Activated naive CD4-positive, alpha-beta T cell treated with anti-CD3 and anti-CD28 coated beads for 36 hours (primary cell): ENCODE measurements at regions of chr1 and their contacts with region 1.

Region 1: GRCh38 chr1:89994805-89995597 is at the start of gene ZNF326:
- DNase-seq: peak; percentile 94
- H3K4me3 Mint-ChIP-seq: peak within 1 kb of the TSS; percentile 96
- H3K27ac Mint-ChIP-seq: peak within 1 kb of the TSS; percentile 90
- H3K4me1 Mint-ChIP-seq: peaks cover 42% of the 10 kb centered on the region
- H3K27me3 Mint-ChIP-seq: no peaks in the 10 kb centered on the region
- total RNA-seq, gene ZNF326: 17.4 to 17.9 TPM

Region 2: GRCh38 chr1:89605692-89606091 is 389.3 kb before region 1 on chr1:
- CTCF ChIA-PET with region 1: no interaction called
- intact Hi-C with region 1: loop called (anchors 2 kb)
- DNase-seq: no peak
- H3K4me3 Mint-ChIP-seq: no peak overlapping the region
- H3K27ac Mint-ChIP-seq: no peak overlapping the region
- H3K4me1 Mint-ChIP-seq: peaks cover 95% of the 10 kb centered on the region
- H3K27me3 Mint-ChIP-seq: no peaks in the 10 kb centered on the region

Region 3: GRCh38 chr1:89804642-89805237 is 190.3 kb before region 1 on chr1:
- CTCF ChIA-PET with region 1: interaction called, 52 read pairs
- intact Hi-C with region 1: loop called (anchors 2 kb)
- DNase-seq: peak; percentile 96
- H3K4me3 Mint-ChIP-seq: no peak overlapping the region
- H3K27ac Mint-ChIP-seq: no peak overlapping the region
- H3K4me1 Mint-ChIP-seq: no peaks in the 10 kb centered on the region
- H3K27me3 Mint-ChIP-seq: peaks cover 2% of the 10 kb centered on the region

Region 4: GRCh38 chr1:89820422-89821321 is 174.3 kb before region 1 on chr1 and contains the start of gene LRRC8D:
- CTCF ChIA-PET with region 1: no interaction called
- intact Hi-C with region 1: loop called (anchors 1 kb)
- DNase-seq: peak; percentile 81
- H3K4me3 Mint-ChIP-seq: peak within 1 kb of the TSS; percentile 85
- H3K27ac Mint-ChIP-seq: peak within 1 kb of the TSS; percentile 26
- H3K4me1 Mint-ChIP-seq: peaks cover 34% of the 10 kb centered on the region
- H3K27me3 Mint-ChIP-seq: no peaks in the 10 kb centered on the region
- total RNA-seq, gene LRRC8D: 14.4 to 15.0 TPM

Region 5: GRCh38 chr1:89855413-89856123 is 139.4 kb before region 1 on chr1:
- CTCF ChIA-PET with region 1: no interaction called
- intact Hi-C with region 1: loop called (anchors 2 kb)
- DNase-seq: no peak
- H3K4me3 Mint-ChIP-seq: peak overlapping the region; percentile 44
- H3K27ac Mint-ChIP-seq: no peak overlapping the region
- H3K4me1 Mint-ChIP-seq: peaks cover 11% of the 10 kb centered on the region
- H3K27me3 Mint-ChIP-seq: no peaks in the 10 kb centered on the region

Region 6: GRCh38 chr1:90291431-90292216 is 296.6 kb after region 1 on chr1:
- CTCF ChIA-PET with region 1: no interaction called
- intact Hi-C with region 1: no loop called
- DNase-seq: no peak
- H3K4me3 Mint-ChIP-seq: no peak overlapping the region
- H3K27ac Mint-ChIP-seq: no peak overlapping the region
- H3K4me1 Mint-ChIP-seq: no peaks in the 10 kb centered on the region
- H3K27me3 Mint-ChIP-seq: peaks cover 3% of the 10 kb centered on the region